RWPE1 (cell line): ENCODE measurements at regions of chr15 and their contacts with region 1.

Region 1: GRCh38 chr15:48861813-48862431 is 16.0 kb upstream of the EID1 start:
- DNase-seq: peak; percentile 62
- H3K27ac ChIP-seq: no peak overlapping the region
- CTCF ChIP-seq: peak; percentile 96

Region 2: GRCh38 chr15:48963524-48964113 is 101.7 kb after region 1 on chr15 and contains the start of gene SHC4:
- CTCF ChIA-PET with region 1: interaction called, 37 read pairs
- POLR2A ChIA-PET with region 1: no interaction called
- DNase-seq: peak; percentile 92
- H3K27ac ChIP-seq: peak within 1 kb of the TSS; percentile 36; the same call in 1 of the 2 replicates
- CTCF ChIP-seq: peak; percentile 60

Region 3: DNA sequence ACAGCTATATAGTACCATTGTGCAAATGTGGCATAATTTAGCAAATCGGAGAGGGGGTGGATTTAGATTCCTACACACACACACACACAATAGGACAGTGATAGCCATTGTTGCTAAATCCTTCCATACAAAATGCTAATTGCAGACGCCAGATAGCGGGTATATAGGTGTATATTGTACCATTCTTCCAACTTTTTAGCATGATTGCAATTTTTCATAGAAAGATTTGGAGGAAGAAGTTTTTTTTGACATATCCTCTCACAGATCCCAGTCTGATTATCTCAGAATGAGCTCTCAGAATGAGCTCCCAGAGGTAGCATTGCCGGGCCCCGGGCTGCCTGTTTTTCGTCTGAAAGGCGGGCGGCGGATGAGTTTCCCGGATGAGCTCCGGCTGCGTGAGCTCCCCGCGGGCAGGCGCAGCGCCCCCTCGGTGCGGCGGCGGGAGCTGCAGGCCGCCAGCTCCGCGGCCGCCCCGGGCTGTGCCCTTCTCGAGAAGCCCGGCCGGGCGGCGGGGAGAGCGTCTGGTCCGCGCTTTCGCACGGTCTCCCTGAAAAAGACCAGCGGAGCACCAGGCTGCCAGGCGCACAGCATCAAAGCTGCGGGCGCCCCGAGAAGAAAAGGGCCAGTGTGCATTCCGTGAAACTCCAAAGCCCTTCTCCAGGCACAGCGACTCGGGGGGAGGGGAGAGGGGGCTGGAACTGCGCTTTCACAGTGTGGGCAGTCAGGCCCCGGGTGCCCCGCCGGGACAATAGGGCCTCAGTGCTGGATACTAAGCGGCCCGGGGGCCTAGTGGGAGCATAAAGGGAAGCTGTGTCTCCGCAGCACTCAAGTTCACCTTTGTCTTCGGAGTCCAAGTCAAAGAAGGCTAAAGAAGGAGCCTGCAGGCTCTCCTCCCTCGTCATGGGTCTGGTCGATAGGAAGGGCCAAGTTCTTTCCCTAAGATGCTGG is 113.8 kb after region 1 on chr15:
- CTCF ChIA-PET with region 1: interaction called, 20 read pairs
- POLR2A ChIA-PET with region 1: no interaction called
- DNase-seq: peak; percentile 79
- H3K27ac ChIP-seq: peak overlapping the region; percentile 20
- CTCF ChIP-seq: peak; percentile 98

Region 4: DNA sequence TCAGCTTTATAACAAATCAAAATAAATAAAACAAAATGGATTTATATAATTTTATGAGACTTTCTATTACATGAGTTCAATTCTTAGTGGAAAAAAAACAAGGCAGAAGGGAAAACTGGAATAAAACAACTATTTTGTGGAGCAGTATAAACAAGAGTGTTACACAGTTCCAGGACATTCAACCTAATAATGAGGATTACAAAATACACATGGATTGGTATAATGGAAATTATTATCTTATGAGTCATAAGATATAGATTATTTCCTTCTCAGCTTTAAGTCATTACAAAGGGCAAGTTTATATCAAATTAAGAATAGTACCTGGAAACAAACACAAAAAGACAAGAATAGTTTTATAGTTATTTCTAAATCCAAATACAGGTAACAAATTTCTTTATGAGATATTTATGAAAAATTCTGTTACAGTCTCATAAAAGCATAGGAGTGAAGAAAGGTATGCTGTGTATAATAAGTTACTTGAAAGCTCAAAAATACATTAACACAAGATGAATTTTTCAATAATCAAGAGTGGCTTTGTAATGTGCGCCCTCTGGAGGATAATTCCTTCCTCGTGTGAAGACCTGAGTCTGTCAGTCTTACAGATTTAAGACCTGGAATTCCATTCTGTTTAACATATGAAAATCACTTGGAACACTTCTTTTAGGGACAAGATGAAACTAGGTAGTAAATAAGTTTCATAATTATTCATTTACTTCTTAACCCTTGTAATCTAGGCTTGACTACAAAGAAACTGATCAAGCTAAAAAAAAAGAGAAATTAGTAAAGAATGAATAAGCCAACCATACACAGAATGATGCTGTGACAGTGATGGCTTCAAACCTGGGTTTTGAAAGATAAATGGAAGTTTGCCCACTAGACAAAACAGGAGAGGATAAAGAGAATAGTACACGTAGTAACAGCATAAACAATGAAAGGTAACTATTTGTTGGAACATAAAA is 284.0 kb after region 1 on chr15:
- CTCF ChIA-PET with region 1: interaction called, 12 read pairs
- POLR2A ChIA-PET with region 1: interaction called, 5 read pairs
- DNase-seq: peak; percentile 54
- H3K27ac ChIP-seq: no peak overlapping the region
- CTCF ChIP-seq: peak; percentile 93

Region 5: GRCh38 chr15:49421991-49422390 is 560.1 kb after region 1 on chr15:
- CTCF ChIA-PET with region 1: interaction called, 10 read pairs
- POLR2A ChIA-PET with region 1: no interaction called
- DNase-seq: peak; percentile 23
- H3K27ac ChIP-seq: no peak overlapping the region
- CTCF ChIP-seq: peak; percentile 94